Heart left ventricle (tissue), 16 donors: ENCODE measurements at regions of chr7 and their contacts with region 1.

Region 1: GRCh38 chr7:151315038-151315655 is 26.5 kb upstream of the NUB1 start:
- DNase-seq: peak in 4 of 5 donors; percentile 62 to 74 (median 66)
- ATAC-seq: peak in 3 of 4 donors; percentile 53 to 84 (median 84)
- H3K4me3 ChIP-seq: peak overlapping the region in 1 of 12 donors; percentile 1
- H3K27ac ChIP-seq: no peak overlapping the region
- H3K4me1 ChIP-seq: peaks cover 0 to 15% (median 6%) of the 10 kb centered on the region in 12 donors
- H3K27me3 ChIP-seq: no peaks in the 10 kb centered on the region
- CTCF ChIP-seq: peak; percentile 73 to 92 (median 80)
- POLR2A ChIP-seq: no peak

Region 2: DNA sequence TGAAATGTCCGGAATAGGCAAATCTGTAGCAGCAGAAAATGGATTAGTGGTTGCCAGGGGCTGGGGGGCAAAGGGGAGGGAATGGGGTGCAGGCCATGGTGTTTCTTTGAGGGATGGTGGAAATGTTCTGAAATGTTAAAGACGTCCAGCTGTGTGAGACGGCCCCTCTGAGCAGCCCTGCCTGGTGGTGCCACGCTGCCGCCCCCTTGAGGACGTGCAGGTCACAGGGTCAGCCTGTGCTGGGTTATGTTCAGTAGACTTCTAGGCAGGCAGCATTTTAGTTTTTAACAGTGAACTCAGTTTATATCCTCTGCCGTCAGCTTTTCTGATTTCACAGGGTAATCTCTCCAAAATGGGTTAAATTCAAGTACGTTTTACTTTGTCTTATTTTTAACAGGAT is 35.9 kb after region 1 on chr7:
- intact Hi-C with region 1: loop called (anchors 1 to 5 kb)
- DNase-seq: no peak
- ATAC-seq: peak in 1 of 4 donors; percentile 24
- H3K4me3 ChIP-seq: no peak overlapping the region
- H3K27ac ChIP-seq: peak overlapping the region in 1 of 12 donors; percentile 54
- H3K4me1 ChIP-seq: peaks cover 0 to 38% (median 10%) of the 10 kb centered on the region in 12 donors
- H3K27me3 ChIP-seq: no peaks in the 10 kb centered on the region
- CTCF ChIP-seq: peak in 2 of 12 donors; percentile 7 to 33
- POLR2A ChIP-seq: no peak

Region 3: DNA sequence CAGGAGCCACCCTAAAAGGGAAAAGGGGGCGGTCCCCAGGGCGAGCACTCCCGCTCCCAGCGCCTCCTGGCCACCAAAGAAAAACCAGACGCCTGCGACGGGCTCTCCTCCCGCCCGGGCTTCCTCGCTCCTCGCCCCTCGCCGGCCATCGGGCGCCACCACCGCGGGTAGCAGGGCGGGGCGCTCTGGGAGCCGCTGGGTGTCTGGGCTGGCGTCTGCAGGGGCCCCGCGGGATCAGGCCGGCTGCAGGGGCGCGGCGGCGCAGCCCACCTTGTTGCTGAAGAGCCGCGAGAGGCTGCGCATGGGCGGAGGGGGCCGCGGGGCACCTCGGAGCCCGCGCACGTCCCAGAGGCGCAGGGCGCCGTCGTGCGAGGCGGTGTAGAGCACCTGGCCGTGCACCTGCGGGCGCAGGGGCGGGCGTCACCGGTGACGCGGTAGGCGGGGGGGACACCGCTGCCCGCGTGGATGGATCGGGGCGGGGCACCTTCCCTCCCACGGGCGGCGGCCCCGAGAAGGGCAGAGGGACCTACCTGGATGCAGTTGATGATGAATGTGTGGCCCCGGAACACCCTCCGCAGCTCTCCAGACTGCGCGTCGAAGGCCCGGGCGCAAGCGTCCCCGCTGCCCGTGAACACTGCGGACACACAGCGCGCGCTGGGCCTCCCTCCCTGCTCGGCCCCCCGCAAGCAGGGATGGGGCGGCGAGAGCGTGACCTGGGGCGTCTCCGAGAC is 66.4 kb after region 1 on chr7:
- intact Hi-C with region 1: no loop called
- DNase-seq: peak in 2 of 5 donors; percentile 18 to 69
- ATAC-seq: peak in 1 of 4 donors; percentile 28
- H3K4me3 ChIP-seq: peak overlapping the region; percentile 13 to 47 (median 40)
- H3K27ac ChIP-seq: no peak overlapping the region
- H3K4me1 ChIP-seq: peaks cover 0 to 21% (median 13%) of the 10 kb centered on the region in 12 donors
- H3K27me3 ChIP-seq: peaks cover 6 to 41% (median 19%) of the 10 kb centered on the region in 9 donors
- CTCF ChIP-seq: no peak
- POLR2A ChIP-seq: no peak